ENCODE measurements at regions of chr2 and their contacts with region 1.

Region 1: GRCh38 chr2:210476194-210477128 is at the start of gene LANCL1:
- DNase-seq: peak; percentile 76
- H3K4me3 Mint-ChIP-seq: peak within 1 kb of the TSS; percentile 99
- H3K27ac Mint-ChIP-seq: peak within 1 kb of the TSS; percentile 98
- H3K4me1 Mint-ChIP-seq: peaks cover 46% of the 10 kb centered on the region
- H3K27me3 Mint-ChIP-seq: no peaks in the 10 kb centered on the region
- total RNA-seq, gene LANCL1: 27.3 and 33.6 TPM in 2 replicates

Region 2: GRCh38 chr2:210171309-210172203 is 304.9 kb before region 1 on chr2 and contains the start of gene KANSL1L:
- intact Hi-C with region 1: loop called (anchors 2 kb)
- DNase-seq: peak; percentile 95
- H3K4me3 Mint-ChIP-seq: peak within 1 kb of the TSS; percentile 98
- H3K27ac Mint-ChIP-seq: peak within 1 kb of the TSS; percentile 96
- H3K4me1 Mint-ChIP-seq: peaks cover 30% of the 10 kb centered on the region
- H3K27me3 Mint-ChIP-seq: peaks cover 31% of the 10 kb centered on the region
- total RNA-seq, gene KANSL1L: 3.0 and 3.6 TPM in 2 replicates

Measured in activated T-helper 1 cell treated with anti-CD3 and anti-CD28 coated beads, Interleukin-12 subunit alpha, Interleukin-12 subunit beta, Interleukin-2, Interleukin-4 antibody, amounts not matched to agents 30 ng/mL and 10 ng/mL and 1 ng/mL, durations not matched to agents 14 hours and 24 hours and 36 hours (primary cell).